ENCODE measurements at regions of chr1 and their contacts with region 1.

Region 1: DNA sequence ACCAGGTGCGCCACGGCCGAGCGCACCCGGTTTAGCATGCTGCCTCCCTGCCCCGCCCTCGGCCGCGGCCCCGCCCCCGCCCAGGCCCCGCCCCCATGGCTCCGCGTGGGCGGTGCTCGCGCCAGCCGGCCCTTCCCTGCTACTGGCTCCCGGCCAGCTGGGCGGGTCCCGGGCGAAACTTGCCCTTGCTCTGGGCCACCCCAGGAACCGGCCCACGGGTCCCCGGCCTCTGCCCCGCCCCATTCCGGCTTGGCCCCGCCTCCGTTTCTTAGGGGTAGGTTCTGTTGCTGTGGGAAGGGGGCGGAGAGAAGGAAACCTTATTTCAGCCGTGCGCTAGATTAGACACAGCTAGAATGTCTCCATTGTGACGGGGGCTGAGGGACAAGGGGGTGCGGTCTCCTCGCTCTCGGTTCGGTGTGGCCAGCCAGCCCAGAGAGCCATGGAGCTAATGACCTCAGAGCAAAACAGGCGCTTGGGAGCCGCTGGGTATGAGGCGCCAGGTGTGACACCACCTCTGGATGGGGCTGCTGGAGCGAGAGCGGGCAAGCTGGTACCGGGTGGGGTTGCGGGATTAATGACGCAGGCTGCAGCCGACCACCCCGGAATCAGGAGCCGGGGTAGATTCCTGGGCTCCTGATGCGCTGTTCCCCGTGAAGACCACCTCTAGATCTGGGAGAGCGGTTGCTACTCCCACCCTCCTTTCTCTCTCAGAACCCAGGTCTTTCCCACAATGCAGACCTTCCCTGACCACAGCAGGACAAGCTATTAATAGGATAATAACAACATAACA is at the start of gene PPM1J:
- DNase-seq: peak; percentile 95
- H3K4me3 Mint-ChIP-seq: peak within 1 kb of the TSS; percentile 78
- H3K27ac Mint-ChIP-seq: no peak within 1 kb of the TSS
- H3K4me1 Mint-ChIP-seq: peaks cover 24% of the 10 kb centered on the region
- H3K27me3 Mint-ChIP-seq: peaks cover 24% of the 10 kb centered on the region
- total RNA-seq, gene PPM1J: 0.74 to 1.0 TPM

Region 2: DNA sequence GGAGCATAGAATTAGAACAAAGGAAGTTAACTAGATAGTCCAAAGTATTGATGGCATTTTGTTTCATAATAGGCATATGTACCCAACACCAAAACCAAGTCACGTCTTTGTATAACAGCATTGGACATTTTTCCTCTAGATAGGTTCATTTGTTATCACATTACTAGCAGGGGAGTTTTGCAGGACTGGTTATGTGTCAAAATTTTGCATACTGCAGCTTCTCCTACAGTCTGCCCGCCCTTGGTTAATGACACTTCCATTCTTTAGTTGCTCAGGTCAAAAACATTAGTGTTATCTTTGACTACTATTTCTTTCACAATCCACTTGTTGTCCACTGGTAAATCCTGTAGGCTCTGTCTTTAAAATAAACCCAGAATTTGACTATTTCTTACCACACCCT is 86.9 kb before region 1 on chr1:
- CTCF ChIA-PET with region 1: no interaction called
- intact Hi-C with region 1: no loop called
- DNase-seq: no peak
- H3K4me3 Mint-ChIP-seq: no peak overlapping the region
- H3K27ac Mint-ChIP-seq: no peak overlapping the region
- H3K4me1 Mint-ChIP-seq: peaks cover 82% of the 10 kb centered on the region
- H3K27me3 Mint-ChIP-seq: no peaks in the 10 kb centered on the region

Region 3: DNA sequence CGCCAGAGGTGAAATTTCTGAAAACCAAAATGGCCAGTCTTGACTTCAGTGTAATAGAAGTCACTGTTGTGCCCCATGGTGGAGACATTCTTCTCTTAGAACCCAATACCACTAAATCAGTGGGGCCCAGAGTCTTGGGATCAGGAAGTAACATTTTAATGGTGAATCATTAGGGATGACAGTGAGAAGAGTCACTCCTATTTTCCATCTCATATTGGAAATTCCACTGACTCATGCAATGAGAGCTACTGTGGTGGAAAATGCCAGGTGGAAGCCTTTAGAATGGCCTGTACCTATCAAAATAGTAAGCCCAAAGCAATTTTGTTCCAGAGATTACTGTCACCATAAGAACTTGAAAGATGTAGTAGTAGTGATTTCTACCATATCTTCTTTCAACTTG is 20.3 kb after region 1 on chr1:
- CTCF ChIA-PET with region 1: interaction called, 25 read pairs
- intact Hi-C with region 1: no loop called
- DNase-seq: peak; percentile 46
- H3K4me3 Mint-ChIP-seq: no peak overlapping the region
- H3K27ac Mint-ChIP-seq: no peak overlapping the region
- H3K4me1 Mint-ChIP-seq: peaks cover 24% of the 10 kb centered on the region
- H3K27me3 Mint-ChIP-seq: peaks cover 19% of the 10 kb centered on the region

Region 4: DNA sequence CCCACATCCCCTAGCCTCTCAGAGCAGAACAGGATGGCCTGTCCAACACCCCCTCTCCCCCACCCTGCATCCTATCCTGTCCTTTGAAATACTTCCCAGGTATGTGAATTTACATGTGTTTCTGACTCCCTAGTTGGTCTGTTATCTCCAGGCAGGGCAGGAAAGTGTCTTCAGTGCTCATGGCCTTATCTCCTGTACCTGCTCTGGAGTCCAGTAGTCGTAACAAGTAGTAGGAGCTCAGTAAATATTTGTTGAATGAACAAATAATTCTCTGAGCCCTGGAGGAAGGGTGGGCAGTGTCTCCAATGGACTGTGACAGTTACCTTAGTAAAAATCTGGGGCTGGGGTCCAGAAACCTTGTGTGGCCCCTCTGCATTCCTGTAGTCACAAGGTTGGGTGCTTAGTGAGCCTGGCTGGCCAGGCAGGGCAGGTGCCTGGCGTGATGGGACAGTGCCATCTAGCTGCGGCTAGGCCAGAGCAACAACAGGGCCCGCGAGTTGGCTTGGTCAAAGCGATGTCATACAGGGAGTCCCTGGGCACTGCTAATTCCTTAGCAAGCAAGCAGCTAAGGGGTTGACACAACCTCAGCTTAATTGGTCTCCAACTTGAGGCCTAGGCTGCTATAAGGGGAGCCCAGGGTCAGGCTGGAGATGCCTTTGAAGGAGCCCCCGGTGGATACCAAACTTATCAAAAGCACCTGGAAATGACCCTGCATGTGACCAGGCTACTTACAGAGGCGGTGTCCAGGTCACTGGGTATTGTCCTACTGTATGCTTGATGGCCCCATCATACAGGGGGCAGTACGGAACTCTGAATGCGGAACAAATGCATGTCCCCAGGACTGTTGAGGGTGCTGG is 88.7 kb after region 1 on chr1:
- CTCF ChIA-PET with region 1: interaction called, 303 read pairs
- intact Hi-C with region 1: loop called (anchors 1 kb)
- DNase-seq: peak; percentile 81
- H3K4me3 Mint-ChIP-seq: no peak overlapping the region
- H3K27ac Mint-ChIP-seq: no peak overlapping the region
- H3K4me1 Mint-ChIP-seq: no peaks in the 10 kb centered on the region
- H3K27me3 Mint-ChIP-seq: no peaks in the 10 kb centered on the region

Region 5: DNA sequence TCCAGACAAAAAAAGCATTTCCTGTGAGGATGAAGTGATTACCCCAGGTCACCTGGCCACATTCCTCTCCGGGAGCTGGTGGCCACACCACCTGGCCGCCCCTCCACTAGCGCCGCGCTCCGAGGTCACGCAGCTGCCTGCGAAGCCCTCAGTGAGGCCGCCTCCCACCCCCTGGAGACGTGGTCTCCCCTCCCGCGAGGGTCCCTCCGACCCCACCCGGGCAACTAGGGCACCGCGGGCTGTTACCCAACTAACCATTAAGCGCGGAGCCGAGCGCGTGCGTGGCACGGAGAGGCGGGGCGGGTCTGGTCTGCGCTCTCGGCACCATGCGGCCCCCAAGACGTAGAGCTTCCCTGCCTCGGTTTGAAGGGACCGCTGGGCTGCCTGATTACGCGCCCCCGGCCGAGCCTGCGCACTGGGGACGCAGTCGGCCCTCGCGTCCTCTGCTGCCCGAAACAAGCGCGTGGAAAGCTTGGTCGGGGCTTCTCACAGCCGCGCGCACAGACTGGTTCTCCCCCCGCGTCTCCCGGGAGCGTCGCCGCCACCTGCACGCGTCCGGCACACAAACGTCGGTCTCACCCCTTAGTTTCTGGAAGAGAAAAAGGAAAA is 134.1 kb after region 1 on chr1:
- CTCF ChIA-PET with region 1: no interaction called
- intact Hi-C with region 1: no loop called
- DNase-seq: peak; percentile 7
- H3K4me3 Mint-ChIP-seq: peak overlapping the region; percentile 55
- H3K27ac Mint-ChIP-seq: no peak overlapping the region
- H3K4me1 Mint-ChIP-seq: peaks cover 2% of the 10 kb centered on the region
- H3K27me3 Mint-ChIP-seq: peaks cover 41% of the 10 kb centered on the region

Region 6: DNA sequence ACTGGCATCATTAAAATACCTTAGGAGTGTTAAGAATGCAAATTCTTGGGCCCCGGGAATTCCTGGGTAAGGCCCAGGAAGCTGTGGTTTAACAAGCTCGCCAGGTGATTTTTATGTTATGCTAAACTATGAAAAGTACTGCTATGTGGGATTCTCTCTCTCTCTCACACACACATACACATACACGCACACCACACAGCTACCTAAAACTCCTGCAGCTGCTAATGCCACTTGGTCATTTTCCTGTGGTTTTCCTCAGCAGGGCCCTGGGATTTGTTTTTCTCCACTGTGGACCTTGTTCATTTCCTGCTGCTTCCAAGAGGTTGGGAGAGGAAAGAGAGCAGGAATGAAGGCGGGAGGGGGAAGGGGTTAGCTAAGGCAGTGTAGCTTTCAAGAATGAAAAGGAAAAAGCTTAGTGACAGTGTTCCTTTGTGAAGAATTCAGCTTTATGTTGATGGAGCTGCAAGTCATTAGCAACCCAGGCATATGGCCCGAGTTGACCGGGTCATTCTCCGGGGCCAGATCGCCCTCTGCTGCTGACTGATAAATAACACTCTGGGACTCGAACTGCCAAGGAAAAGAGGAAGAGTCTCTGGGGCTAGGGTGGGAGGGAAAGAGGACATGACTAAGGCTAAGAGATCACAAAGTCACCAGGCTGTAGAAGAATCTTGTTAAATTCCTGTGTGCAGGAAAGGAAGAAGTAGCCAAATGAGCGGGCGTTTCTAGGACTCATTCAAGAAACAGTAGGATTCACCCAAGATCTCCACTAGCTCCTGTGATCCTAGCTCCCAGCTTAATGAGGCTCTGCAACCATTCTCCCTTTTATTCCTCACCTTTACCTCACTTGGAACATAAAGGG is 327.1 kb after region 1 on chr1:
- CTCF ChIA-PET with region 1: interaction called, 6 read pairs
- intact Hi-C with region 1: loop called (anchors 2 kb)
- DNase-seq: peak; percentile 65
- H3K4me3 Mint-ChIP-seq: no peak overlapping the region
- H3K27ac Mint-ChIP-seq: peak overlapping the region; percentile 73
- H3K4me1 Mint-ChIP-seq: peaks cover 26% of the 10 kb centered on the region
- H3K27me3 Mint-ChIP-seq: peaks cover 2% of the 10 kb centered on the region

Region 7: GRCh38 chr1:113389953-113390834 is 674.7 kb after region 1 on chr1 and contains the start of gene MAGI3:
- CTCF ChIA-PET with region 1: no interaction called
- intact Hi-C with region 1: loop called (anchors 10 kb)
- DNase-seq: peak; percentile 97
- H3K4me3 Mint-ChIP-seq: peak within 1 kb of the TSS; percentile 83
- H3K27ac Mint-ChIP-seq: peak within 1 kb of the TSS; percentile 48
- H3K4me1 Mint-ChIP-seq: peaks cover 20% of the 10 kb centered on the region
- H3K27me3 Mint-ChIP-seq: no peaks in the 10 kb centered on the region
- total RNA-seq, gene MAGI3: 5.9 to 6.4 TPM

Region 8: DNA sequence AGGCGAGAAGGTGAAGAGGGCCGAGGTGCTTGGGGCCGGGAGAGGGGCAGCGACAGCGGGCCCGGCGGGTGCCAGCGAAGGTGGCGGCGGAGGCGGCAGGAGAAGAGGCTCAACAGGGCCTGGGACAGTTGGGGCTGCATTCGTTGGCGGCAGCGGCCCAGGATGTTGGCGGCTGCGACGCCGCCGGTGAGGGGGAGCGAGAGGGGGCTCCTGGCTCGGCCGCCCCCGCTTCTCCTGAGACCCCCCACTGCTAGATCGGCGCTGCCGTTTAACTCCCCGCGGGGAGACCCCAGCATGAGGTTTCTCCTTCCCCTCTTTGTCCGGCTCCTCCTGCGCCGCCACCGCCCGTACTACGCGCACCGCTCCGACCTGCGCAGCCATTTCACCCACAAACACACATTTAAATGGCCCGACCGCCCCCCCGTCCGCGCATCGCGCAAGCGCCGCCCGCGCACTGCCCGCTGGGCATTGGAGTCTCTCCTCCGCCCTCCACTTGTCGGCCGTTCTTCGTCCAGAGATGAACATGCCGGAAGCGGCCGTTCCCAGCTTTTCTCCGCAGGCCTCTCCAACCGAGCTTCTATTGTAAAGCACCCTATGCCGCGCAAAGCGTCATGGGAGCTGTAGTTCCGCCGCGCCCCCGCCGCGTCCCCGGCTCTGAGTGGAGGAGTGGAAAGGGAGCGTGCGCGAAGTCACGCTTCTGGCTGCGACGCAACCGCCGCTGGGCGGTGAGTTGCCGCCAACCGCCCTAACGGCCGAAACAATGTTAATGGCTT is 1096.6 kb after region 1 on chr1 and contains the start of gene RSBN1:
- CTCF ChIA-PET with region 1: no interaction called
- intact Hi-C with region 1: loop called (anchors 5 kb)
- DNase-seq: peak; percentile 99
- H3K4me3 Mint-ChIP-seq: peak within 1 kb of the TSS; percentile 98
- H3K27ac Mint-ChIP-seq: peak within 1 kb of the TSS; percentile 94
- H3K4me1 Mint-ChIP-seq: peaks cover 31% of the 10 kb centered on the region
- H3K27me3 Mint-ChIP-seq: no peaks in the 10 kb centered on the region
- total RNA-seq, gene RSBN1: 13.6 to 14.3 TPM

Measured in activated naive CD4-positive, alpha-beta T cell treated with anti-CD3 and anti-CD28 coated beads for 36 hours (primary cell).